ENCODE measurements at regions of chr3 and their contacts with region 1.

Region 1: GRCh38 chr3:183766745-183767606 is 58.4 kb downstream of the MAP6D1 start:
- DNase-seq: peak; percentile 52 to 76 (median 70)
- ATAC-seq: peak; percentile 84 to 90
- H3K4me3 ChIP-seq: no peak overlapping the region
- H3K27ac ChIP-seq: no peak overlapping the region
- H3K4me1 ChIP-seq: peaks cover 3% of the 10 kb centered on the region
- H3K27me3 ChIP-seq: no peaks in the 10 kb centered on the region

Region 2: GRCh38 chr3:183460081-183461055 is 306.6 kb before region 1 on chr3:
- intact Hi-C with region 1: loop called in 2 of 4 experiments (anchors 5 to 10 kb)
- DNase-seq: no peak
- ATAC-seq: no peak
- H3K4me3 ChIP-seq: no peak overlapping the region
- H3K27ac ChIP-seq: no peak overlapping the region
- H3K4me1 ChIP-seq: no peaks in the 10 kb centered on the region
- H3K27me3 ChIP-seq: no peaks in the 10 kb centered on the region

Region 3: DNA sequence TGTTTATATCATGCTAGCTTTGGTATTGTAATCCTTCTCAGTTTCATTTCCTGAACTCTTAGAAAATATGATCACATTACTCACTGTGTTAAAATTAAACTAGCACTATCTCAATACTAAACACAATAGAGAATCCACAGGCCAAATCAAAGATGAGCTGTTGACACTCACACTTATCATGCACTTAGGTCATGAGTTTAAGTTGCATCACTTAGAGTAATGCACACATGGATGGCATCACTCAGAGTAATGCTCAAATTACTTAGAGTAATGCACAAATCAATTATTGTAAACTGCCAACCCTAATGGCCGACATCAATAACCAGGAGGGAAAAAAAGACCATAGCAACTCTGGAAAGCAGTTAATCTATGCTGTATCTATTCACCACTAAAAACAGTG is 298.6 kb before region 1 on chr3:
- intact Hi-C with region 1: loop called in 2 of 4 experiments (anchors 5 to 10 kb)
- DNase-seq: no peak
- ATAC-seq: no peak
- H3K4me3 ChIP-seq: no peak overlapping the region
- H3K27ac ChIP-seq: no peak overlapping the region
- H3K4me1 ChIP-seq: no peaks in the 10 kb centered on the region
- H3K27me3 ChIP-seq: no peaks in the 10 kb centered on the region

Region 4: DNA sequence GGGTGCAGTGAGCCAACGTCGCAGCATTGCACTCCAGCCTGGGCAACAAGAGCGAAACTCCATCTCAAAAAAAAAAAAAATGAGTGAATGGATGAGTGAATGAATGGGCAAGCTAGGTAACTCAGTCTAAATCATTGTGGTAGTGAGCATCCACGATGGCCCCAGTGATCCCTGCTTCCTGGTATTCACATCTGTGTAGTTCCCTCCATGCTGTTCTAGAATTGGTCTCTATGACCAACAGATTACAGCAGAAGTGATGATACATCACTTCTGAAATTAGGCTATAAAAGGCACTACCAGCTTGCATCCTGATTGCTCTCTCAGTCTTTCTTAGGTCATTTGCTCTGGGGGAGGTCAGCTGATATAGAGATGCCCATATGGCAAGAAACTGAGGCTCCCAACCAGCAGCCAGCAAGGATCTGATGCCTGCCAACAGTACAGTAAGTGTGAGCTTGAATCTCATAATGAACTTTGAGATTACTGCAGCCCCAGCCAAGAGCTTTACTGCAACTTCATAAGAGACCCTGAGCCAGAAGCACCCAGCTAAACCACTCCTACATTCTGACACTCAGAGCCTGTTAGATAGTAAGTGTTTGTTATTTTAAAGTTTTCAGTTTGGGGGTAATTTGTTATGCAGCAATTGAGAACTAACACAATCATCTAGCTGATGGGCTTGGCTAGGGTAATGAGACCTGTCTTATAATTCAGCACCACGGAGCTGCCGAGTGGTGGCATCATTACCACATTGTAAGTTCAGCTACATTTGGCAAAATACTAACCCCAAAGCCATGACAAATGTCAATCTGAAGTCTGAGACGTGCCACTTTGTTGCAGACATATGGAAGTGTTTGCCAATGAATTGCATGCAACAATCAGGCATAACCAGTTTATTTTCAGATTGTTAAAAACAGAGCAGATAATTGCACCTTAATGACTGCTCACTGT is 264.5 kb before region 1 on chr3:
- intact Hi-C with region 1: loop called (anchors 2 to 10 kb)
- DNase-seq: peak in 1 of 3 donors; percentile 63
- ATAC-seq: peak; percentile 59 to 70
- H3K4me3 ChIP-seq: no peak overlapping the region
- H3K27ac ChIP-seq: no peak overlapping the region
- H3K4me1 ChIP-seq: no peaks in the 10 kb centered on the region
- H3K27me3 ChIP-seq: no peaks in the 10 kb centered on the region

Region 5: GRCh38 chr3:183680061-183680460 is 86.9 kb before region 1 on chr3:
- intact Hi-C with region 1: no loop called
- DNase-seq: no peak
- ATAC-seq: no peak
- H3K4me3 ChIP-seq: no peak overlapping the region
- H3K27ac ChIP-seq: no peak overlapping the region
- H3K4me1 ChIP-seq: no peaks in the 10 kb centered on the region
- H3K27me3 ChIP-seq: no peaks in the 10 kb centered on the region

Region 6: GRCh38 chr3:183697610-183698317 is 69.2 kb before region 1 on chr3 and contains the start of gene YEATS2:
- intact Hi-C with region 1: loop called in 1 of 4 experiments (anchors 10 kb)
- DNase-seq: peak; percentile 71 to 88 (median 86)
- ATAC-seq: peak; percentile 91 to 93
- H3K4me3 ChIP-seq: peak within 1 kb of the TSS; percentile 95
- H3K27ac ChIP-seq: peak within 1 kb of the TSS; percentile 87
- H3K4me1 ChIP-seq: peaks cover 4% of the 10 kb centered on the region
- H3K27me3 ChIP-seq: no peaks in the 10 kb centered on the region
- total RNA-seq, gene YEATS2: 11.6 to 12.0 (median 11.7) TPM

Region 7: GRCh38 chr3:183825456-183826161 is 58.6 kb after region 1 on chr3 and contains the start of gene MAP6D1:
- intact Hi-C with region 1: no loop called
- DNase-seq: peak; percentile 34 to 78 (median 68)
- ATAC-seq: peak; percentile 62 to 69
- H3K4me3 ChIP-seq: peak within 1 kb of the TSS; percentile 74
- H3K27ac ChIP-seq: no peak within 1 kb of the TSS
- H3K4me1 ChIP-seq: peaks cover 2% of the 10 kb centered on the region
- H3K27me3 ChIP-seq: no peaks in the 10 kb centered on the region
- total RNA-seq, gene MAP6D1: 1.0 to 2.5 (median 1.9) TPM

Measured in right cardiac atrium (tissue), 5 donors.